HAP-1 (cell line): ENCODE measurements at regions of chr18 and their contacts with region 1.

Region 1: DNA sequence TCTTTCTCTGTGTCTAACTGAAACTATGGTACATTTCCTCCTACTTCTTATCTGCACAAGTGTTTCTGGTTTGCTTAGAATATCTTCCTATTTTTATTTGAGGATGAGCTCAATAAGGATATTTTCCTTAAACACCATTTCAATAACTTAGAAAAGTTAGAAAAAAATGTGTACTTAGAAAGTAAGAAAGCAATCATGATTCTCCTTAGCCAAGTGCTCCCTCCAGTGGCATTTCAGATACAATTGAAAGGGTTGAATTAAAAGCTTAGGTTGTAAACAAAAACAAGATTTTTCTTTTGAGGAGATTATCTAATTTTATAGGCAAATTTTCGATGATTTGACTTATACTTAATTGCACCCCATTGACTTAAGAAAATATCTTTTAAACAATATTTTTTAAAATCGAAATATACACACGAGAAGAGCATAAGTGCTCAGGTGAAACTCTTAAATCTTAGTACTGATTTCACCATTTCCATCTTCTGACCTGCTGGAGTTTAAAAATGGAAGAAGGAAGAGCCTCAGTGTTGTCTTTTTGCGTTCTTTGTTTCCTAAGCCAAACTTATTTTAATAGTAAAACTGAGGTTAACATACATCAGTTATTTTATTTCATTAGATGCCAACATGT is 26.9 kb downstream of the C18orf63 start:
- DNase-seq: peak; percentile 16
- H3K4me3 ChIP-seq: no peak overlapping the region
- H3K4me1 ChIP-seq: no peaks in the 10 kb centered on the region
- H3K27me3 ChIP-seq: no peaks in the 10 kb centered on the region

Region 2: GRCh38 chr18:72762515-72763122 is 1579.9 kb before region 1 on chr18:
- in situ Hi-C with region 1: loop called (anchors 25 kb)
- DNase-seq: peak; percentile 8 to 34
- H3K4me3 ChIP-seq: no peak overlapping the region
- H3K4me1 ChIP-seq: no peaks in the 10 kb centered on the region
- H3K27me3 ChIP-seq: no peaks in the 10 kb centered on the region

Region 3: GRCh38 chr18:74040459-74041332 is 301.8 kb before region 1 on chr18:
- in situ Hi-C with region 1: loop called (anchors 25 kb)
- DNase-seq: peak; percentile 25 to 72
- H3K4me3 ChIP-seq: no peak overlapping the region
- H3K4me1 ChIP-seq: no peaks in the 10 kb centered on the region
- H3K27me3 ChIP-seq: no peaks in the 10 kb centered on the region

Region 4: DNA sequence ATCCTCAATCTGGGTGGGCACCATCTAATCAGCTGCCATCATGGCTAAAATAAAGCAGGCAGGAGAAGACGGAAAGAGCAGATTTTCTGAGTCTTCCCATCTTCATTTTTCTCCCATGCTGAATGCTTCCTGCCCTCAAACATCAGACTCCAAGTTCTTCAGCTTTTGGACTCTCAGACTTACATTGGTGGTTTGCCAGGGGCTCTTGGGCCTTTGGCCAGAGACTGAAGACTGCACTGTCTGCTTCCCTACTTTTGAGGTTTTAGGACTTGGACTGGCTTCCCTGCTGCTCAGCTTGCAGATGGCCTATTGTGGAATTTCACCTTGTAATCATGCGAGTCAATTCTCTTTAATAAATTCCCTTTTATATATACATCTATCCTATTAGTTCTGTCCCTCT is 78.0 kb after region 1 on chr18:
- in situ Hi-C with region 1: no loop called
- DNase-seq: no peak
- H3K4me3 ChIP-seq: no peak overlapping the region
- H3K4me1 ChIP-seq: no peaks in the 10 kb centered on the region
- H3K27me3 ChIP-seq: no peaks in the 10 kb centered on the region